ENCODE measurements at regions of chr17 and their contacts with region 1.

Region 1: DNA sequence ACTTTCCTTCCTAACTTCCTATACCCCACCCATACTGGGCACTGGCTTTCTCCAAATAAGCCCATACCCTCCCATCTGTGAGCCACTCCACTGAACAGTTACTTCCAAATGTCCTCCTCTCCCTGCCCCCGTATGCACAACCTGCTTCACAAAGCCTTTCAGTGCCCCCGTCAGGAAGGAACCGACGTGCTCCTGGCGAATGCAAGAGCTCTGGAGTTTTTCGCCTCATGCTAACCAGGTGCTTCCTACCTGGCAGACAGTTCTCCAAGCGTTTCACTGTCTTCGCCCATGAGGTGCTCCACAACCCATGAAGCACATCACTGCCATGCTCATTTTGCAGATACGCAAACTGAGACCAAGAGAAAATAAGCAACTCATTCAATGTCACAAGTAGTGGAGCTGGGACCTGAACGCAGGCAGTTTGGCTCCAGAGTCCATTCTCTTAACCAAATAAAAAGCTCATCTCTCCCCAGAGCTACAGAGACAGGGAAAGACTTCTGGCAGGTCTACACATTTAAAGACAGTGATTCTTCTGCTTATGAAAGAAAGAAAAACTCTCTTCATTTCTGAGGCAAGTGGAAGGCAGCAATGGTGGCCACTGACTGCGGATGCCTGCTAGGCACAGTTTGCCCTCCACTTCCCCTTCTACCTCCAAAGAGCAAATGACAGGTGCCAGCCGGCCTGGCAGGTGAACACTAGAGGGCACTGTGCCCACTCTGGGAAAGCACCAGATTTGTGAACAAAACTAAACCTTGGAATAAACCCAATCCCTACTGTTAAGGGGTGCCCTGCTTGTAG is 23.8 kb downstream of the SPHK1 start:
- DNase-seq: peak; percentile 81
- ATAC-seq: peak; percentile 84
- H3K4me3 Mint-ChIP-seq: no peak overlapping the region
- H3K27ac Mint-ChIP-seq: peak overlapping the region; percentile 39
- H3K4me1 Mint-ChIP-seq: peaks cover 13% of the 10 kb centered on the region
- H3K27me3 Mint-ChIP-seq: no peaks in the 10 kb centered on the region

Region 2: DNA sequence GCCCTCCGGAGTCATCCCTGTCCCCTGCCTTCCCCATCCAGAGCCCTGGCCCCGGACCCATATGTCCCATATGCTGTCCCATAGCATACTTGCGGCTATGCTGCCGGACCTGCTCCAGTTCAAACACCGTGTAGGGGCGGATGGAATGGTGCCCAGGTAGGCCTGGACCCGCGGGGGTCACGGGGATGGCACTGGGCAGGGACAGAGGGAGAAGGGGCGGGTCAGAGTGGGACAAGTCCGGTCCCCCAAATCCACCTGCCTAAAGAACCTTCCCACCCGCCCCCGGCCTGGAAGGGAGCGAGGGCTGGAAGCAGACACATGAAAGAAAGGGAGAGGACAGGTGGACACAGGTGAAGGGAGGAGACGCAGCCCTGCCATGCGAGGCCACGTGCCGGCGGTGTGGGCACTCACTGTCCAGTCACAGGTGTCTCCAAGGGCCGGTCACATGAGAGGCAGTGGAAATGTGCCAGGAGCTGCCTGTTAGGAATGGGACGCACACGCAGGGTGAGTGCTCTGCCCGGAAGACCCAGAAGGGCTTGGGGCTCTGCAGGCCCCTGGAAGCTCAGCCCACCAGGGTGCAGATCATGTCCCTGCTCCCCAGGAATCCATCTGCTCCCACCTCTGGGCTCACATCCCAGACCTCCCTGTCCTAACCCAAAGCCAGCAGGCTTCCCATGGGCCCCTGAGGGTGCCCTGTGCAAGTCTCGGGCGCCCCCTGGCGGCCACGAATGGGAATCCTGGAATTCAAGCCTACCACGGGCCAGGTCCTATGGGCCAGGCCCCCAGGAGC is 129.1 kb before region 1 on chr17:
- CTCF ChIA-PET with region 1: no interaction called
- POLR2A ChIA-PET with region 1: no interaction called
- DNase-seq: peak; percentile 89
- ATAC-seq: peak; percentile 82
- H3K4me3 Mint-ChIP-seq: no peak overlapping the region
- H3K27ac Mint-ChIP-seq: peak overlapping the region; percentile 61
- H3K4me1 Mint-ChIP-seq: peaks cover 23% of the 10 kb centered on the region
- H3K27me3 Mint-ChIP-seq: no peaks in the 10 kb centered on the region

Region 3: GRCh38 chr17:76427501-76428231 is 19.4 kb after region 1 on chr17:
- CTCF ChIA-PET with region 1: interaction called, 10 read pairs
- POLR2A ChIA-PET with region 1: no interaction called
- DNase-seq: no peak
- ATAC-seq: no peak
- H3K4me3 Mint-ChIP-seq: no peak overlapping the region
- H3K27ac Mint-ChIP-seq: no peak overlapping the region
- H3K4me1 Mint-ChIP-seq: peaks cover 4% of the 10 kb centered on the region
- H3K27me3 Mint-ChIP-seq: no peaks in the 10 kb centered on the region

Region 4: GRCh38 chr17:76437467-76438402 is 29.5 kb after region 1 on chr17:
- CTCF ChIA-PET with region 1: interaction called, 10 read pairs
- POLR2A ChIA-PET with region 1: no interaction called
- DNase-seq: no peak
- ATAC-seq: no peak
- H3K4me3 Mint-ChIP-seq: no peak overlapping the region
- H3K27ac Mint-ChIP-seq: no peak overlapping the region
- H3K4me1 Mint-ChIP-seq: peaks cover 21% of the 10 kb centered on the region
- H3K27me3 Mint-ChIP-seq: no peaks in the 10 kb centered on the region

Region 5: GRCh38 chr17:76452660-76453430 is 44.6 kb after region 1 on chr17 and contains the start of gene UBE2O:
- CTCF ChIA-PET with region 1: interaction called, 18 read pairs
- POLR2A ChIA-PET with region 1: no interaction called
- DNase-seq: peak; percentile 95
- ATAC-seq: peak; percentile 91
- H3K4me3 Mint-ChIP-seq: peak within 1 kb of the TSS; percentile 91
- H3K27ac Mint-ChIP-seq: peak within 1 kb of the TSS; percentile 82
- H3K4me1 Mint-ChIP-seq: peaks cover 40% of the 10 kb centered on the region
- H3K27me3 Mint-ChIP-seq: peaks cover 3% of the 10 kb centered on the region
- total RNA-seq, gene UBE2O: 28.4 to 31.6 TPM

Region 6: GRCh38 chr17:76458580-76459490 is 50.6 kb after region 1 on chr17:
- CTCF ChIA-PET with region 1: interaction called, 18 read pairs
- POLR2A ChIA-PET with region 1: no interaction called
- DNase-seq: no peak
- ATAC-seq: no peak
- H3K4me3 Mint-ChIP-seq: no peak overlapping the region
- H3K27ac Mint-ChIP-seq: no peak overlapping the region
- H3K4me1 Mint-ChIP-seq: no peaks in the 10 kb centered on the region
- H3K27me3 Mint-ChIP-seq: peaks cover 3% of the 10 kb centered on the region

Region 7: DNA sequence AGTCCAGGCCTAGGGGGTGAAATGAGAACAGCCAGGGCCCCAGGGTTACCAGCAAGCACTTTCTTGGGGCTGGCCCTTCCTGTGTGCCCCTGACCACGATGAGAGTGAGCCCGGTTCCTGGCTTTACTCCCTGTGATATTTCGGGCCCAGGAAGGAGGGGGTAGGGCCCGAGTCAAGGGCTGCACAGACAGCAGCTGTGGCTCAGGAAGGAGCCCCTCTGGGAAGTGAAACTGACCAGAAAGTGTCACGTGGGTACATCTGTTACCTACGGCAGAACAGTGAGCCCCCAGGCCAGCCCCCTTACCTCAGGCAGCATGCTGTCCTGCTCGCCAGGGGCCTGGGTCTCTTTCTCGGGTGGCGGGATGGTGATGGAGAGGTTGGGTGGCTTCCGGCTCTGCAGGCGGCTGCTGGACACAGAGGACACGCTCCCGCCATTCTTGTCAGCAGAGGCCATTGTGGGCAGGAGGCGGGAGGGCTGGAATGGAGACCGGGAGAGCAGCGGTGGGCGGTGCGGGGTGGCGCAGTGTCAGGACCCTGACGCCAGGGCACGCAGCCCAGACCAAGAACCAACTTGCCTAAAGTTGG is 72.9 kb after region 1 on chr17:
- CTCF ChIA-PET with region 1: no interaction called
- POLR2A ChIA-PET with region 1: no interaction called
- DNase-seq: no peak
- ATAC-seq: peak; percentile 54
- H3K4me3 Mint-ChIP-seq: peak overlapping the region; percentile 22
- H3K27ac Mint-ChIP-seq: peak overlapping the region; percentile 84
- H3K4me1 Mint-ChIP-seq: peaks cover 31% of the 10 kb centered on the region
- H3K27me3 Mint-ChIP-seq: no peaks in the 10 kb centered on the region

Region 8: DNA sequence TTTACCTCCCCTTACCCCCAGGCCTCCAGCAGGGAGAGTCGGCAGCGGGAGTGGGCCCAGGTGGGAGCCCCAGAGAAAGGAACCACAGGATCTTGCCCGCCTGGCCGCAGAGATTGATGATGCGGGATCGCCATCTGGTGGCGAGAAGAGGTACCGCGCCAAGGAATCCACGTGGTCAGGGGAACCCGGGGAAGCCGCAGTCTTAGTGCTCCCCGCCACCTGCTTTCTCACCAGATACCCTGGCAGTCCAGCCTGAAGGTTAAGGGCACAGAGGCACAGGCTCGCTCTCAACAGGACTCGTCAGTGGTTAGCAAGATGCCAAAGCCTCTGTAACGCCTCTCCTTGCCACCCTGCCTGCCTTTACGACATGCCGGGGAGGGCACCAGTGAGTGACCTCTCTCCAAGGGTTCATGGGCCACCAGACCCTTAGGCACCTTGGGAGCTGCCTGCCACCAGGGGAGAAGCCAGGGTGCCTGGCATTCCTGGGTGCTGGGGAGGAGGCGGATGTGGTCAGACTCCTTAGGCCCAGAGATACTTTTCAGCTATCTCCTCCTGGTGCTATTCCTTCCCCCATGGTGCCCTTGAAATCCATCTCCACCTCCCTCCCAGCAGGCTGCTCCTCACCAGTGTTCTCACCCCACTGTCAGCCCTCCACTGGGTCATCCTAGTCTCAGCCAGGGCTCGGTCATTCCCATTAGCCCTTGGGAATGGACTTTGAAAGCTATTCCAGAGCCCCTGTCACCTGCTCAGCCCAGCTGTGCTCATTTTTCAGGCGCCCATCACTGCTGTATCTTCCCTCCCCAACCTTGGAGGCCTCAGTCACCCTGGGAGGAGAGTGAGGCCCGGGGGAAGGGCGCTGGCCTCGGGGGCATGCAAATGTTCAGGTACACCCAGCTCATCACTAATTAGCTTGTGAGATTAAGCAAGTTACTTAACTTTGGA is 98.4 kb after region 1 on chr17:
- CTCF ChIA-PET with region 1: interaction called, 33 read pairs
- POLR2A ChIA-PET with region 1: no interaction called
- DNase-seq: peak; percentile 91
- ATAC-seq: peak; percentile 85
- H3K4me3 Mint-ChIP-seq: no peak overlapping the region
- H3K27ac Mint-ChIP-seq: peak overlapping the region; percentile 49
- H3K4me1 Mint-ChIP-seq: peaks cover 43% of the 10 kb centered on the region
- H3K27me3 Mint-ChIP-seq: peaks cover 4% of the 10 kb centered on the region